ENCODE measurements at regions of chr12 and their contacts with region 1.

Region 1: DNA sequence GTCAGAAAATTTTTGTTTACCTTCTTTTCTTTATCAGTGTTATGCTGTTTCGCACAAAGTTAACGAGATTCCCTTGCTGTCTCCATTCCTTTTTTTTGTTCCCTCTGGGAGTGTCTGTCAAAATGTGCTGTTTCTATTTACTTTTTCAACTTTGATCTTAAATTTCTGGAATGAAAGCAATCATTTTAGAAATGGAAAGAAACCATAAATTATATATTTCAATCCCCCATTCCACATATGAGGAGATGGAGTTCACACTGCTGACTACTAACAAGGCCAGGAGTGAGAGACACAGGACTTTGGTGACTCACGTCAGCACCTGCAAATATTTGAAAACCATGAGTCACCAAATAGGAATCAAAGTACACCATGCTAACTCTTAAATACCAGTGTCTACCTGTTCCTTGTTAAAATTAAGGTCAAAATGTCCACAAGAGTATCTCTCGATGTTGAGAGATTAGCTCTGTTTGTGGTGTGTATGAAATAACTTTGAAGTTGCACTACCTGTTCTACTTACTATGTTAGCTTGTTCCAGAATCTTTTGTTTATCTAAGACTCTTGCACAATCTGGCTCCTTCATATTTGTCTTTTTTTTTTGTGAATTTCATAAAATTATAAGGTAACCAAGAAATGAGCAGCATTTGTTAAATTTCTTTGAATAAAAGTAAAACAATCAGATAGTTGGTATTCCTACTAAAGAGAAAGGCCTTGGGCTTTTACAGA is 106.0 kb downstream of the RMST start:
- DNase-seq: peak; percentile 81 to 82
- H3K4me3 ChIP-seq: peak overlapping the region; percentile 8; the same call in 1 of the 2 replicates
- H3K4me3 Mint-ChIP-seq: peak overlapping the region; percentile 28
- H3K27ac Mint-ChIP-seq: peak overlapping the region; percentile 63
- H3K4me1 ChIP-seq: peaks cover 70% of the 10 kb centered on the region
- H3K4me1 Mint-ChIP-seq: peaks cover 24% of the 10 kb centered on the region
- H3K27me3 ChIP-seq: no peaks in the 10 kb centered on the region
- H3K27me3 Mint-ChIP-seq: no peaks in the 10 kb centered on the region
- CTCF ChIP-seq: no peak

Region 2: GRCh38 chr12:97501422-97501821 is 67.2 kb before region 1 on chr12:
- CTCF ChIA-PET with region 1: no interaction called
- POLR2A ChIA-PET with region 1: no interaction called
- intact Hi-C with region 1: loop called (anchors 5 kb)
- DNase-seq: no peak
- H3K4me3 ChIP-seq: no peak overlapping the region
- H3K4me3 Mint-ChIP-seq: no peak overlapping the region
- H3K27ac Mint-ChIP-seq: no peak overlapping the region
- H3K4me1 ChIP-seq: peaks cover 18% of the 10 kb centered on the region
- H3K4me1 Mint-ChIP-seq: peaks cover 8% of the 10 kb centered on the region
- H3K27me3 ChIP-seq: no peaks in the 10 kb centered on the region
- H3K27me3 Mint-ChIP-seq: no peaks in the 10 kb centered on the region
- CTCF ChIP-seq: no peak

Region 3: GRCh38 chr12:97545786-97546185 is 22.8 kb before region 1 on chr12:
- CTCF ChIA-PET with region 1: no interaction called
- POLR2A ChIA-PET with region 1: no interaction called
- intact Hi-C with region 1: no loop called
- DNase-seq: no peak
- H3K4me3 ChIP-seq: no peak overlapping the region
- H3K4me3 Mint-ChIP-seq: no peak overlapping the region
- H3K27ac Mint-ChIP-seq: no peak overlapping the region
- H3K4me1 ChIP-seq: no peaks in the 10 kb centered on the region
- H3K4me1 Mint-ChIP-seq: no peaks in the 10 kb centered on the region
- H3K27me3 ChIP-seq: no peaks in the 10 kb centered on the region
- H3K27me3 Mint-ChIP-seq: no peaks in the 10 kb centered on the region
- CTCF ChIP-seq: no peak

Region 4: GRCh38 chr12:97672870-97673269 is 104.3 kb after region 1 on chr12:
- CTCF ChIA-PET with region 1: no interaction called
- POLR2A ChIA-PET with region 1: no interaction called
- intact Hi-C with region 1: no loop called
- DNase-seq: no peak
- H3K4me3 ChIP-seq: no peak overlapping the region
- H3K4me3 Mint-ChIP-seq: no peak overlapping the region
- H3K27ac Mint-ChIP-seq: no peak overlapping the region
- H3K4me1 ChIP-seq: no peaks in the 10 kb centered on the region
- H3K4me1 Mint-ChIP-seq: no peaks in the 10 kb centered on the region
- H3K27me3 ChIP-seq: no peaks in the 10 kb centered on the region
- H3K27me3 Mint-ChIP-seq: no peaks in the 10 kb centered on the region
- CTCF ChIP-seq: no peak

Region 5: GRCh38 chr12:97837401-97837800 is 268.8 kb after region 1 on chr12:
- CTCF ChIA-PET with region 1: no interaction called
- POLR2A ChIA-PET with region 1: no interaction called
- intact Hi-C with region 1: loop called (anchors 2 kb)
- DNase-seq: peak; percentile 22 to 37
- H3K4me3 ChIP-seq: no peak overlapping the region
- H3K4me3 Mint-ChIP-seq: peak overlapping the region; percentile 5
- H3K27ac Mint-ChIP-seq: no peak overlapping the region
- H3K4me1 ChIP-seq: peaks cover 6% of the 10 kb centered on the region; the same call in 1 of the 2 replicates
- H3K4me1 Mint-ChIP-seq: peaks cover 21% of the 10 kb centered on the region
- H3K27me3 ChIP-seq: no peaks in the 10 kb centered on the region
- H3K27me3 Mint-ChIP-seq: no peaks in the 10 kb centered on the region
- CTCF ChIP-seq: no peak

Region 6: DNA sequence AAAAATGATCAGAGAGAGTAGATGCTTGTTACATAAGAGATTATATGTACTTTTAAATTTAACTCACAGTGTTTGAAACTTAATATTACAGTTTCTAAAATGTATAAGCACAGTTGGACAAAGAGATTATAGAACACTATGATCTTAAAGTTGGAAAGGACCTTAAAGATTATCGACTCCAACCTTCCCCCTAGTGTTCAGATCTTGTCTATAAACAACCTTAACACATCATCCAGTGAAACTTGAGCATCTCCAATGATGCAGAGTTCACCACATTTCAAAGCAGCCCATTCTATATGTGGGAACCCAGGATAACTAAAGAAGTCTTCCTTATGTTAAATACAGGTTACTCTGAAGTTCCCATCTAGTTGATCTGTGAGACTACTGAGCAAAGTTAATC is 374.7 kb after region 1 on chr12:
- CTCF ChIA-PET with region 1: no interaction called
- POLR2A ChIA-PET with region 1: no interaction called
- intact Hi-C with region 1: loop called (anchors 2 kb)
- DNase-seq: no peak
- H3K4me3 ChIP-seq: no peak overlapping the region
- H3K4me3 Mint-ChIP-seq: no peak overlapping the region
- H3K27ac Mint-ChIP-seq: no peak overlapping the region
- H3K4me1 ChIP-seq: peaks cover 16% of the 10 kb centered on the region
- H3K4me1 Mint-ChIP-seq: peaks cover 27% of the 10 kb centered on the region
- H3K27me3 ChIP-seq: no peaks in the 10 kb centered on the region
- H3K27me3 Mint-ChIP-seq: no peaks in the 10 kb centered on the region
- CTCF ChIP-seq: peak in 1 of 2 experiments; percentile 27

Region 7: GRCh38 chr12:98162906-98163678 is 594.5 kb after region 1 on chr12:
- CTCF ChIA-PET with region 1: no interaction called
- POLR2A ChIA-PET with region 1: no interaction called
- intact Hi-C with region 1: loop called (anchors 1 kb)
- DNase-seq: peak; percentile 52 to 74
- H3K4me3 ChIP-seq: no peak overlapping the region
- H3K4me3 Mint-ChIP-seq: peak overlapping the region; percentile 68
- H3K27ac Mint-ChIP-seq: peak overlapping the region; percentile 83
- H3K4me1 ChIP-seq: peaks cover 40% of the 10 kb centered on the region
- H3K4me1 Mint-ChIP-seq: peaks cover 39% of the 10 kb centered on the region
- H3K27me3 ChIP-seq: no peaks in the 10 kb centered on the region
- H3K27me3 Mint-ChIP-seq: no peaks in the 10 kb centered on the region
- CTCF ChIP-seq: no peak

Measured in Caco-2 (cell line).